ENCODE measurements at regions of chr1 and their contacts with region 1.

Region 1: DNA sequence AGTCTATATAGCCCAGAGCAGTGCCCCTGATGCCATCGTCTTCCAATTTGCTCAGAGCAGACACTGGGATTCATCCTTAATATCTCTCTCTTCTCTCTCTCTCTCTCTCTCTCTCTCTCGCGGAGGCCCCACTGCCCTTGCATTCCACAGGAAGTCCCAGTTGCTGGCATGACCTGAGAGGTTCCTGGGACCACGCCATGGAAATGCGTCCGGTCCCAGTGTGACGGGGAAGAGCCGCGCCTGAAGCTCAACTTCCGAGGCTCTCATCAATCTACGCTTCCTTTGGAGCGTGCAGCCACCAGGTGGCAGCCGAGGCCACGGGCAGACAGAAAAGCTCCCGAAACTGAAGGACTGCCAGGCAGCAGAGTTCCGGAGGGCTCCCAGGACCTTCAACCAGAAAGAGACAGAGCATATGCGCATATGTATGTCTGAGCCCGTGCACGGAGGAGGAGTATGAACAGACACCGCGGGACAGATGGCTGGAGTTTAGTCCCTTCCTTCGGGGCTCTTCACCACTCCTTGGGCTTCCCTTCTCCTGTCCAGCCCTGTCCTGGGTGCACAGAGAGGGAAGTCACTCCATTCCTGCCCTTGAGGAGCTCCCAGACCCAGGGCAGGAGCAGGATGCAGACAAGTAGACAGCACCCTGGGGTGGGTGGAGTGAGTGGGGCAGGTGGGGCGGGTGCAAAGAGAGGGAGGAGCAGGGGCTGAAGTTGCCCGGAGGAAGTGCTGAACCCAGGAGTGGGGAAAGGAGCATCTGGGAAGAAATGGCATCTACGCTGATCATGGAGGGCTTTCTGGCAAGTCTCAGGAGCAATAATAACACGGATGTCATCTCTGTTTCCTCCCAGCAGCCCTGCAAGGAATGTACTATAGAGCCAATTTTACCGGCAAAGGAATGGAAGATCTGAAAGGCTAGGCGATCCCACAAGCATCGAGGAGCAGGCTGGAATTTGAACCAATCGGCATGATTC is 10.5 kb downstream of the PDZK1IP1 start:
- DNase-seq: peak; percentile 91
- H3K4me3 ChIP-seq: peak overlapping the region; percentile 28 to 58 (median 44)
- H3K27ac ChIP-seq: peak overlapping the region; percentile 19
- H3K4me1 ChIP-seq: peaks cover 15% of the 10 kb centered on the region
- H3K27me3 ChIP-seq: no peaks in the 10 kb centered on the region
- CTCF ChIP-seq: peak; percentile 83 to 98

Region 2: GRCh38 chr1:46724991-46725735 is 454.1 kb before region 1 on chr1:
- CTCF ChIA-PET with region 1: no interaction called
- dilution Hi-C with region 1: no loop called
- in situ Hi-C with region 1: loop called in 1 of 2 experiments (anchors 25 kb)
- intact Hi-C with region 1: no loop called
- DNase-seq: peak; percentile 58
- H3K4me3 ChIP-seq: no peak overlapping the region
- H3K27ac ChIP-seq: no peak overlapping the region
- H3K4me1 ChIP-seq: peaks cover 9% of the 10 kb centered on the region
- H3K27me3 ChIP-seq: no peaks in the 10 kb centered on the region
- CTCF ChIP-seq: peak; percentile 91 to 92

Region 3: DNA sequence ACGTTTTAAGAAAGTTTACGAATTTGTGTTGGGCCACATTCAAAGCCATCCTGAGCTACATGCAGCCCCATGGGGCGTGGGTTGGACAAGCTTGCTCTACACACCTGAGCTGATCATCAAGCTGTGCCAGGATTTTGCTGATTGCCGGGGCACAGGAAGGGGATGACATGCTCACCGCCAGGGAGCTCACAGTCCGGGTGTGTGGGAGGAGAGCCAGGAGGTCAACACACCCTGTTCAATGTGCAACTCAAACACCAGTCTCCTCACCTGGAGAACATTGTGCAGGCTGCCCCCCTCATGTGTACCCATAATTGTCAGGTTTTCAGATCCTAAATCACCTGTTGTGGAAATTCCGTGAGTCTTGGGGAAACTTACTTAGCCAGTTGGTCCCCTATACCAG is 239.0 kb before region 1 on chr1:
- CTCF ChIA-PET with region 1: no interaction called
- dilution Hi-C with region 1: no loop called
- in situ Hi-C with region 1: no loop called
- intact Hi-C with region 1: loop called (anchors 1 kb)
- DNase-seq: no peak
- H3K4me3 ChIP-seq: no peak overlapping the region
- H3K27ac ChIP-seq: no peak overlapping the region
- H3K4me1 ChIP-seq: no peaks in the 10 kb centered on the region
- H3K27me3 ChIP-seq: peaks cover 7% of the 10 kb centered on the region
- CTCF ChIP-seq: no peak

Region 4: GRCh38 chr1:47104816-47105215 is 74.5 kb before region 1 on chr1:
- CTCF ChIA-PET with region 1: no interaction called
- dilution Hi-C with region 1: no loop called
- in situ Hi-C with region 1: no loop called
- intact Hi-C with region 1: loop called (anchors 5 kb)
- DNase-seq: peak; percentile 52
- H3K4me3 ChIP-seq: no peak overlapping the region
- H3K27ac ChIP-seq: no peak overlapping the region
- H3K4me1 ChIP-seq: peaks cover 16% of the 10 kb centered on the region
- H3K27me3 ChIP-seq: no peaks in the 10 kb centered on the region
- CTCF ChIP-seq: peak in 1 of 2 donors; percentile 4

Region 5: GRCh38 chr1:47241114-47242113 is 62.1 kb after region 1 on chr1:
- CTCF ChIA-PET with region 1: no interaction called
- dilution Hi-C with region 1: no loop called
- in situ Hi-C with region 1: no loop called
- intact Hi-C with region 1: no loop called
- DNase-seq: no peak
- H3K4me3 ChIP-seq: no peak overlapping the region
- H3K27ac ChIP-seq: no peak overlapping the region
- H3K4me1 ChIP-seq: no peaks in the 10 kb centered on the region
- H3K27me3 ChIP-seq: peaks cover 4% of the 10 kb centered on the region
- CTCF ChIP-seq: no peak

Region 6: DNA sequence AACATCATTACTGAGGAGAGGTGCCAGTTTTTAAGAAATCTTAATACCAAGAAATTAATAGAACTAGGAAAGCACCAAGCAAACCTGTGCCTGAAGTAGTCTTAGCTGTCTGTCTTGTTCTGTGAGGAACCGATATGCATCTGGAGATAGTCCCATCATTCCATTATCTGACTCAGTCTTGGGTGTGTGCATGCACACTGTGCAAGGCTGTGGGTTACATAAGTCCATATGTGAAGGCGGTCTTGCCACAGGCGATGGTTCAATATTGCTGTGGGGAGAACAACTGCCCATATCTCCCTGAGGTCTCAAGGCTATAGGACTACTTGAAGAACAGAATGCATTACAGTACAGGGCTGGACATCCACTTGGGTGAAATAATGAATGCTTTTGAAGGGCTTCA is 100.9 kb after region 1 on chr1:
- CTCF ChIA-PET with region 1: interaction called, 3 read pairs
- dilution Hi-C with region 1: loop called (anchors 5 kb)
- in situ Hi-C with region 1: no loop called
- intact Hi-C with region 1: no loop called
- DNase-seq: peak; percentile 35
- H3K4me3 ChIP-seq: no peak overlapping the region
- H3K27ac ChIP-seq: no peak overlapping the region
- H3K4me1 ChIP-seq: no peaks in the 10 kb centered on the region
- H3K27me3 ChIP-seq: no peaks in the 10 kb centered on the region
- CTCF ChIP-seq: no peak

Region 7: GRCh38 chr1:47388891-47389238 is 209.6 kb after region 1 on chr1:
- CTCF ChIA-PET with region 1: no interaction called
- dilution Hi-C with region 1: no loop called
- in situ Hi-C with region 1: no loop called
- intact Hi-C with region 1: loop called (anchors 1 kb)
- DNase-seq: peak; percentile 56
- H3K4me3 ChIP-seq: no peak overlapping the region
- H3K27ac ChIP-seq: no peak overlapping the region
- H3K4me1 ChIP-seq: no peaks in the 10 kb centered on the region
- H3K27me3 ChIP-seq: no peaks in the 10 kb centered on the region
- CTCF ChIP-seq: peak; percentile 87 to 89

Region 8: GRCh38 chr1:47437447-47438164 is 258.3 kb after region 1 on chr1 and contains the start of gene FOXD2:
- CTCF ChIA-PET with region 1: interaction called, 5 read pairs
- dilution Hi-C with region 1: no loop called
- in situ Hi-C with region 1: no loop called
- intact Hi-C with region 1: loop called (anchors 2 kb)
- DNase-seq: peak; percentile 86
- H3K4me3 ChIP-seq: peak within 1 kb of the TSS; percentile 67 to 91 (median 71)
- H3K27ac ChIP-seq: peak within 1 kb of the TSS; percentile 56
- H3K4me1 ChIP-seq: peaks cover 35% of the 10 kb centered on the region
- H3K27me3 ChIP-seq: peaks cover 19% of the 10 kb centered on the region
- CTCF ChIP-seq: peak; percentile 39 to 75
- total RNA-seq, gene FOXD2: 0.50 to 1.1 TPM

Measured in mammary epithelial cell (primary cell).